ENCODE measurements at regions of chr1 and their contacts with region 1.

Region 1: GRCh38 chr1:93304716-93305138 is 41.0 kb upstream of the DR1 start:
- DNase-seq: peak in 1 of 2 donors; percentile 10
- ATAC-seq: peak; percentile 65 to 79
- H3K4me3 ChIP-seq: no peak overlapping the region
- H3K27ac ChIP-seq: no peak overlapping the region
- H3K4me1 ChIP-seq: peaks cover 0 to 2% of the 10 kb centered on the region in 2 donors
- H3K27me3 ChIP-seq: no peaks in the 10 kb centered on the region
- CTCF ChIP-seq: peak; percentile 66 to 92 (median 75)
- POLR2A ChIP-seq: no peak

Region 2: DNA sequence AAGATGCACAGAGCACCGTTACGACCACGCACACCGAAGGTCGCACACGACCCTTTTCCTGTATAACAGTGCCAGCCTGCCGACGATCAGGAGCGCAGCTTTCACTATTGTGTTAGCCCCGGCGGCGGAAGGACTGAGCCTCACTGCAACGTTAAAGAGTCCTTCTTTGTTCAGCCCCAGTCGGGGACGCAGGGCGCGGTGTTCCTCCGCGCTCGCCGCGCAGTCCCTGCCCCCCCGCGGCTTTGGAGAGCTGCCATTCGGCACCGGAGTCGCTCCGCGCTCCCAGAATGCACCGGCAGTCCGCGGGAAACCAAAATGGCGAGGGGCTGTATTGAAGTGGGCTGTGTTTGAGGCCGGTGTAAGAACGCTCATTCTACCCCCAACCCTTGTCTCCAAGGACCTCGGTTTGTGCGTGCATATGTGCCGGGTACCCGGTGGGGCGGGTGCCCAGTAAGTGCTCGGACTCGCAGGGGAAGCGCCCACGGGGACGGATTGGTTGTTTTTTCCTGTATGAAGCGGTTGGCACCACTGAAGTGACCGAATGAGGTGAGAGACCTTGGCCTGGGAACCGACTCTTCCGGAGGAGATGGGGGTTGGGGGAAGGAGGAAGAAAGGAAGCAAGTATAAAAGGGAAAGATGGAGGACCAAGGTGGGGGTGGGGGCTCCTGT is 225.6 kb before region 1 on chr1 and contains the start of gene MTF2:
- in situ Hi-C with region 1: no loop called
- intact Hi-C with region 1: loop called (anchors 5 kb)
- DNase-seq: peak; percentile 86 to 91
- ATAC-seq: peak; percentile 92 to 94
- H3K4me3 ChIP-seq: peak within 1 kb of the TSS; percentile 74 to 96 (median 96)
- H3K27ac ChIP-seq: peak within 1 kb of the TSS; percentile 83 to 90 (median 89)
- H3K4me1 ChIP-seq: peaks cover 23 to 26% of the 10 kb centered on the region in 2 donors
- H3K27me3 ChIP-seq: no peaks in the 10 kb centered on the region
- CTCF ChIP-seq: no peak
- POLR2A ChIP-seq: peak; percentile 57 to 67
- total RNA-seq, gene MTF2: 5.9 to 11.7 (median 9.5) TPM

Region 3: DNA sequence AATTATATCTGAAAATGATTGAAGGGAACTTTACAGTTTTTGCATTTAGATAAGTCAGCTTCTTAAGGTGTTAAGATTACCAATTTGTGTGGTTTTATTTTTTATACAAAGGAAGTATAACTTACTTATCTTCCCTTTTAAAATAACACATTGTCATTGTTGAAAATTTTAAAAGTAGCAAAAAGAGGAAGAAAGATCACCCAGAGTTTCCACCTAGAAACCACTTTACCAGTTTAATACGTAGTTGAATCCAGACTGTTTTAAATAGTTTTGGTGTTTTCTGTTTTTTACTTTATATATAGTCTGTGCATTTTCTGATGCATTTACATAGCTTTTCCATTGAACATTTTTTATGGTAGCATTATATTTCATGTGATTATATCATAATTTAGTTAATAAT is 118.1 kb before region 1 on chr1:
- in situ Hi-C with region 1: no loop called
- intact Hi-C with region 1: no loop called
- DNase-seq: no peak
- ATAC-seq: no peak
- H3K4me3 ChIP-seq: no peak overlapping the region
- H3K27ac ChIP-seq: no peak overlapping the region
- H3K4me1 ChIP-seq: no peaks in the 10 kb centered on the region
- H3K27me3 ChIP-seq: no peaks in the 10 kb centered on the region
- CTCF ChIP-seq: no peak
- POLR2A ChIP-seq: no peak

Region 4: GRCh38 chr1:93414749-93415148 is 110.0 kb after region 1 on chr1:
- in situ Hi-C with region 1: loop called in 1 of 4 experiments (anchors 25 kb)
- intact Hi-C with region 1: no loop called
- DNase-seq: no peak
- ATAC-seq: no peak
- H3K4me3 ChIP-seq: no peak overlapping the region
- H3K27ac ChIP-seq: peak overlapping the region in 1 of 4 donors; percentile 44
- H3K4me1 ChIP-seq: no peaks in the 10 kb centered on the region
- H3K27me3 ChIP-seq: no peaks in the 10 kb centered on the region
- CTCF ChIP-seq: no peak
- POLR2A ChIP-seq: no peak

Region 5: GRCh38 chr1:93437976-93438605 is 133.4 kb after region 1 on chr1:
- in situ Hi-C with region 1: loop called in 1 of 4 experiments (anchors 10 kb)
- intact Hi-C with region 1: no loop called
- DNase-seq: no peak
- ATAC-seq: peak; percentile 72 to 75
- H3K4me3 ChIP-seq: no peak overlapping the region
- H3K27ac ChIP-seq: no peak overlapping the region
- H3K4me1 ChIP-seq: no peaks in the 10 kb centered on the region
- H3K27me3 ChIP-seq: no peaks in the 10 kb centered on the region
- CTCF ChIP-seq: peak; percentile 38 to 74 (median 68)
- POLR2A ChIP-seq: no peak

Region 6: DNA sequence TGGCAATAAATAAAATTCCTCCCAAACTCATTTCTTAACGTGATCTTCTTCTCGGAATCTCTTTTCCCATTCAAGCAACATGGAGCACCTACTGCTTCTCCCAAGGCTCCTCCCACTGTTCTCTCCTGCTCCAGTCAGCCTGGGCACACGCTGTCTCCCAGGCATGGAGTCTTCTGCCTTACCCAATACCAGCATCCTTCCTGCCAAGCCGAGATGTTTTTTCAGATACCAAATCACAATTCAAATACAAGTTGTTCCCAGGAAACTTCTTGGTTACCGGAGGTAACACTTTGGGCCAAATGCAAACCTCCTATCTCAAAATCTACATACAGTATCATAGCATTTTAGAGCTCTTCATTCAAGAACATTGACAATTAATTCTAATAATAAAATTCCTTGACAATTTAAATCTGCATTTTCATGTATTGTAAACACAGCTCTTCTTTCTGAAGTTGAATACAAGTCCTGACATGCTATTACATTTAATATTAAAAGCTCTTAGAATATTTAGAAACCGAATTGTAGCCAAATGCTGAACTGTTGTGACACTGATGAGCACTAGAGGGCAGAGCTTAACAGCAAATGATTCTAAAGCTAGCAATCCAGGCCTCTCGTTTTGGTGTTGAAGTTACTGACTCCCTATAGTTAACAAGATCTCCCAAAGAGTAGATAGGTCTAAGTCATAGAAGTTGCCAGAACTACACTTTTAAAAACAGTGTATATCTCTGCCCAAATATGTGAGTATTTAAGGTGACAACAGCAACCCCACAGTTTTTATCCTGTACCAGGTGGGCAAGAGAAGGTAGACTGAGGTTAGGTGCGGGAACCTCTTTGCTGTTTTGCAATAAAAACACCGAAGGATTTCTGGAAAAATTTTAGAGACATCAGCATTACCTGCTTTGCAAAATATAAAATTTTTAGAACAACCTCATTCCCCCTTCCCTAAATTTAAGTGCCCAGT is 324.7 kb after region 1 on chr1:
- in situ Hi-C with region 1: loop called in 1 of 4 experiments (anchors 25 kb)
- intact Hi-C with region 1: no loop called
- DNase-seq: peak; percentile 55 to 62
- ATAC-seq: peak; percentile 83 to 90
- H3K4me3 ChIP-seq: no peak overlapping the region
- H3K27ac ChIP-seq: peak overlapping the region in 3 of 4 donors; percentile 18 to 77 (median 37)
- H3K4me1 ChIP-seq: peaks cover under 1 to 8% of the 10 kb centered on the region in 2 donors
- H3K27me3 ChIP-seq: no peaks in the 10 kb centered on the region
- CTCF ChIP-seq: peak; percentile 75 to 93 (median 80)
- POLR2A ChIP-seq: no peak

Region 7: GRCh38 chr1:93878889-93879586 is 574.3 kb after region 1 on chr1 and contains the start of gene DNTTIP2:
- in situ Hi-C with region 1: loop called in 2 of 4 experiments (anchors 25 kb)
- intact Hi-C with region 1: no loop called
- DNase-seq: peak; percentile 80 to 84
- ATAC-seq: peak; percentile 94 to 97
- H3K4me3 ChIP-seq: peak within 1 kb of the TSS; percentile 80 to 99 (median 87)
- H3K27ac ChIP-seq: peak within 1 kb of the TSS; percentile 91 to 98 (median 94)
- H3K4me1 ChIP-seq: peaks cover 30 to 35% of the 10 kb centered on the region in 2 donors
- H3K27me3 ChIP-seq: no peaks in the 10 kb centered on the region
- CTCF ChIP-seq: no peak
- POLR2A ChIP-seq: peak; percentile 84 to 89
- total RNA-seq, gene DNTTIP2: 50.4 to 75.3 (median 59.1) TPM